Endothelial cell of umbilical vein (primary cell): ENCODE measurements at regions of chr7 and their contacts with region 1.

Region 1: DNA sequence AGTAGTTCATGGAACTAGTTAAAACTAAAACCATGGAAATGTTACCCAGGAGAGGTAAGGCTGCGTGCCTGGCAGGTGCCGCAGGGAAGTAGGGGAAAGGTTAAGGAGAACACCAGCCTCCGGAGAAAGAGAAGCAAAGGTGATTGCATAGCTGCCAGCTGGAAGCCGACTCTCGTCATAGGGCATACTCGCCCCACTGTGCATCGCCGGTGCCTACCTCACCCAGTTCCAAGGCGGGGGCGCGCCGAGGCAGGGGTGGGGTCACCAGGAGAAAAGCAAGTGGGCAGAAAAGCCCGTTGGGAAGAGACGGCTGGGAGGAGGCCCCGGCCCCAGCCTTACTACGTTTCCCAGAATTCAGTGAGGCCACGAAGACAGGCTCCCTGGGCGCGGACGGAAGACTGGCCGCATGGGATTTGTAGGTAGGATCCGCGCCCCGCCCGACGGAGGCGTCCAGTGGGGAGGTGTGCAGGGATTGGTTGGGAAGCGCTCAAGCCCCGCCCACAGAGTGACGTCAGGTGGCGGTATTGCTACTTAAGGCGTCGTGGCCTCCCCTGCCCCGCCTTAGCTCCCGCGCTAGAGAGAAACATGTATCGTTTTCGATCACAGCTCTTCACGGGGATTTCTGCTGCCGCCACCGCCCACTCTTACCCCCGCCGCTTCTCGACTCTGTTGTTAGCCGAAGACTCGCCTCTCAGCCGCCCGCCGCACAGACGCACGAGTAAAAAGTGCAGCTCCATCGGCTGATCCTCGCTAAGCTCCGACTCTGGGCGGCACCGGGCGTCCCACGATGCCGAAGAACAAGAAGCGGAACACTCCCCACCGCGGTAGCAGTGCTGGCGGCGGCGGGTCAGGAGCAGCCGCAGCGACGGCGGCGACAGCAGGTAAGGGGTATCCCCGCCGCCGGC is at the start of gene IFRD1:
- DNase-seq: peak; percentile 98
- H3K4me3 ChIP-seq: peak within 1 kb of the TSS; percentile 73 to 96 (median 87)
- H3K27ac ChIP-seq: peak within 1 kb of the TSS; percentile 92
- H3K4me1 ChIP-seq: peaks cover 26% of the 10 kb centered on the region
- H3K27me3 ChIP-seq: no peaks in the 10 kb centered on the region
- CTCF ChIP-seq: no peak
- POLR2A ChIP-seq: peak; percentile 99
- total RNA-seq, gene IFRD1: 42.2 and 43.3 TPM in 2 replicates

Region 2: GRCh38 chr7:111561885-111562732 is 888.0 kb before region 1 on chr7 and contains the start of gene IMMP2L:
- CTCF ChIA-PET with region 1: no interaction called
- POLR2A ChIA-PET with region 1: no interaction called
- dilution Hi-C with region 1: no loop called
- intact Hi-C with region 1: loop called (anchors 1 kb)
- DNase-seq: peak; percentile 89
- H3K4me3 ChIP-seq: peak within 1 kb of the TSS; percentile 22 to 63 (median 57)
- H3K27ac ChIP-seq: peak within 1 kb of the TSS; percentile 64
- H3K4me1 ChIP-seq: peaks cover 14% of the 10 kb centered on the region
- H3K27me3 ChIP-seq: peaks cover 0 to 3% of the 10 kb centered on the region in 2 experiments
- CTCF ChIP-seq: peak; percentile 25 to 62
- POLR2A ChIP-seq: peak; percentile 63
- total RNA-seq, gene IMMP2L: 7.9 and 9.9 TPM in 2 replicates

Region 3: GRCh38 chr7:111752022-111752582 is 698.1 kb before region 1 on chr7:
- CTCF ChIA-PET with region 1: interaction called, 13 read pairs
- POLR2A ChIA-PET with region 1: no interaction called
- dilution Hi-C with region 1: no loop called
- intact Hi-C with region 1: no loop called
- DNase-seq: peak; percentile 63
- H3K4me3 ChIP-seq: no peak overlapping the region
- H3K27ac ChIP-seq: no peak overlapping the region
- H3K4me1 ChIP-seq: no peaks in the 10 kb centered on the region
- H3K27me3 ChIP-seq: no peaks in the 10 kb centered on the region
- CTCF ChIP-seq: peak; percentile 85 to 89
- POLR2A ChIP-seq: no peak

Region 4: GRCh38 chr7:112422842-112423496 is 27.2 kb before region 1 on chr7:
- CTCF ChIA-PET with region 1: interaction called, 4 read pairs
- POLR2A ChIA-PET with region 1: interaction called, 15 read pairs
- dilution Hi-C with region 1: no loop called
- intact Hi-C with region 1: no loop called
- DNase-seq: peak; percentile 94
- H3K4me3 ChIP-seq: no peak overlapping the region
- H3K27ac ChIP-seq: peak overlapping the region; percentile 53
- H3K4me1 ChIP-seq: peaks cover 18% of the 10 kb centered on the region
- H3K27me3 ChIP-seq: no peaks in the 10 kb centered on the region
- CTCF ChIP-seq: no peak
- POLR2A ChIP-seq: peak; percentile 59

Region 5: DNA sequence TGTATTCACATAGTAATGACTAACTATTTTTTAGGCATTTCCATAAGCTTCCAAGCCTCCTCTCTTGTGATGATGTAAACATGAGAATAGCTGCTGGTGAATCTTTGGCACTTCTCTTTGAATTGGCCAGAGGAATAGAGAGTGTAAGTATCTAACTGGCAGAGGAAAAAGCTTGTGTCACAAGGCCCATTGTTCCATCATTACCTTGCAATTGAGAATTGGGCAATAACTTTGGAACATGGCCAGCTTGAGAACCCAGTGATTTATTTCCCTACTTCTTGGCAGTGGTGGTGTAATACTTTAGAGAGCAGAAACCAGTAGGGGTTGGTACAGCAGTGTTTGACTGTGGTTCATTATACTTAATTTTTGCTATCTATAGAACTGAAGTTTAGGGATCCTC is 12.1 kb after region 1 on chr7:
- CTCF ChIA-PET with region 1: interaction called, 8 read pairs
- POLR2A ChIA-PET with region 1: interaction called, 31 read pairs
- dilution Hi-C with region 1: no loop called
- intact Hi-C with region 1: no loop called
- DNase-seq: peak; percentile 74
- H3K4me3 ChIP-seq: no peak overlapping the region
- H3K27ac ChIP-seq: no peak overlapping the region
- H3K4me1 ChIP-seq: no peaks in the 10 kb centered on the region
- H3K27me3 ChIP-seq: no peaks in the 10 kb centered on the region
- CTCF ChIP-seq: no peak
- POLR2A ChIP-seq: no peak

Region 6: GRCh38 chr7:112806156-112806555 is 356.0 kb after region 1 on chr7:
- CTCF ChIA-PET with region 1: no interaction called
- POLR2A ChIA-PET with region 1: no interaction called
- dilution Hi-C with region 1: no loop called
- intact Hi-C with region 1: no loop called
- DNase-seq: no peak
- H3K4me3 ChIP-seq: no peak overlapping the region
- H3K27ac ChIP-seq: no peak overlapping the region
- H3K4me1 ChIP-seq: no peaks in the 10 kb centered on the region
- H3K27me3 ChIP-seq: peaks cover 2 to 6% of the 10 kb centered on the region in 2 experiments
- CTCF ChIP-seq: no peak
- POLR2A ChIP-seq: no peak